Activated B cell treated with CpG ODN at 0.5 μM for 24 hours (primary cell): ENCODE measurements at regions of chr18 and their contacts with region 1.

Region 1: GRCh38 chr18:23237524-23238151 is 102.4 kb downstream of the CABLES1 start:
- DNase-seq: peak; percentile 42
- ATAC-seq: peak; percentile 73
- H3K4me3 Mint-ChIP-seq: peak overlapping the region; percentile 75
- H3K27ac Mint-ChIP-seq: peak overlapping the region; percentile 70
- H3K4me1 Mint-ChIP-seq: peaks cover 57% of the 10 kb centered on the region
- H3K27me3 Mint-ChIP-seq: no peaks in the 10 kb centered on the region
- CTCF ChIP-seq: no peak

Region 2: DNA sequence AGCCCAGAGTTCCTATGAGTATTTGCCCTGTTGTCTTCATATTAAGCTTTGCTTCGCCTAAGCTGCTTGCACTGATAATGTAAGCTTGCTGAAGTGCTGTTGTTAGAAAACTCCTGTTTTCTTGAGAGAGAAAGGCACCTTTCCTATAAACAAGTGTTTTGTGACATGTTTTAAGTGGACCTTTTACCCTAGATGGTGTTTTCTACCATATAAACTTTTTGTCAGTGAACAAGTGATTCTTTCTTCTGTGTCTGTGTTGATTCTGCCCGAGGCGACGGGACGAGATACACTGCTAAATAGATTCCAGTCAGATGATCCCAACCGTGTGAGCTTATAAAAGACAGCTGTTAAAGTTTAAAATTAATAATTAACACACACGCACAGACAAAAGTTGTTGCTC is 78.3 kb before region 1 on chr18:
- CTCF ChIA-PET with region 1: no interaction called
- POLR2A ChIA-PET with region 1: no interaction called
- intact Hi-C with region 1: no loop called
- DNase-seq: no peak
- ATAC-seq: no peak
- H3K4me3 Mint-ChIP-seq: no peak overlapping the region
- H3K27ac Mint-ChIP-seq: no peak overlapping the region
- H3K4me1 Mint-ChIP-seq: no peaks in the 10 kb centered on the region
- H3K27me3 Mint-ChIP-seq: peaks cover 3% of the 10 kb centered on the region
- CTCF ChIP-seq: no peak

Region 3: DNA sequence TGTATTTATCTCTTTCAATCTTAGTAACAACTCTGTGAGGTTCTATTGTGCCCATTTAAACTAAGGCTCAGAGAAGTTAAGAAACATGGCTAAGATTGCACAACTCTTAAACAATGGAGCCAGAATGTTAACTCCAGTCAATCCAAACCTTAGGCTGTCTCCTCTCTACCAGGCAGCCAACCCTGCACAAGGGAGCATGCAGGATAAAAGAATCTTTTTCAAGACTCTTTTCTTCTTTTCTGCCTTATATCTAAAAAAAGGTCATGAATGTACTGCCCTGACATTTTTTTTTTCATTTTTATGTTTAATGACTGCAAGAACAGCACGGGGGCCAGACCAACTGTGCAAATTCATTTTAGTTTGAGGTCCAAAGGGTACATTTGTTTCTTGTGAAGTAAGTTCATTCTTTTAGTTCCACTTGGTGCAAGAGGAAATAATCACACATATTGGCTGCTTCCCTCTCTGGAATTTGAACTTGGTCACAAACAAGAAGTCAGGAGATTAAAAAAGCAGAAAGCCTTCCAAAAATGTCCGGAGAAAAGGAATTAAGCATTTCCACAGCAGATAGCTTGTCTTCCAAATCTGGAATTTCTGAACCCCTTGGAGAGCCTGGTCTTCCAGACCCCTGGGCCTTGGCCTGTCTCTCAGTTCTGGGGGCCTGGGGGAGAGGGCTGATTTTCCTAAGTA is 119.4 kb after region 1 on chr18:
- CTCF ChIA-PET with region 1: interaction called, 6 read pairs
- POLR2A ChIA-PET with region 1: interaction called, 3 read pairs
- intact Hi-C with region 1: loop called (anchors 1 kb)
- DNase-seq: no peak
- ATAC-seq: no peak
- H3K4me3 Mint-ChIP-seq: no peak overlapping the region
- H3K27ac Mint-ChIP-seq: no peak overlapping the region
- H3K4me1 Mint-ChIP-seq: peaks cover 33% of the 10 kb centered on the region
- H3K27me3 Mint-ChIP-seq: no peaks in the 10 kb centered on the region
- CTCF ChIP-seq: no peak